ENCODE measurements at regions of chr14 and their contacts with region 1.

Region 1: DNA sequence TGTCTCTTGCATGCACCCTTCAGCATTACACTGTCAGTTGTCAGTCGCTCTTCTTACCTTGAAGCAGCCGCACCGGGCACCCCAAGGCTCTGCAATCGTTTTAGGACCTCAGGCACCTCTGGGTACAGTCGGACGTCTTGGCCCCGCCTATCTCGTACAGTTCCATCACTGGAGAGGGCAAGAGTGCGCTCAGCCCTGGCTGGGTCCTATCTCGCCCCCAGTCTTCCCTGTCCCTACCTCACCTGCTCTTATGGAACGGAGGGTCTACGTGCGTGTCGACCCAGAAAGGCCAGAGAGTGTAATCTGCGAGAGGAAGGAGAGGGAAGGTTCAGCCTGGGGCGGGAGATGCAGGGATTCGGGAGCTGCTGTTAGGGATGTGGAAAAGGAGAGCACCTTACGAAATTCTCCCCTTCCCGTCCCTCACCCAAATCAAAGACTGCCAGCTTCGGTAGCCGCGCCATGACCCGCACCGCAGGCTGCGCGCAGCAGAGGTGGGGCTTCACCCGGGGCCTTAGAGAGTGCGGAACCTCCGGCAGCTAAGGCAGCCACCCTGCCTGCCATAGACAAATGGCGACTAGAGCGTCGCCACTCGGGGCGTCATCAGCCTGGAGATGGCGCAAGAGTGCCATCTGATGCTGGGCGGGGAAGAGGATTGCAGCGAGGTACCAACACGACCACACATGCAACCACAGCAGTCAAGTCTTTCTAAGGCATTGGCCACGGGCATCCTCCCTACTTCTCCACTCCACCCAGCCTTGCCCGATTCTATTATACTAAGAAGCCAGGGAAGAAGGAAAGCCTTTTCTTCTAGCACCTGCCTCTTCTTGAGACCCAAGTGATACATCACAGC is at the start of gene MDP1:
- DNase-seq: peak; percentile 76 to 96 (median 88)

Region 2: GRCh38 chr14:24232121-24232644 is 16.5 kb after region 1 on chr14 and contains the start of gene NEDD8:
- intact Hi-C with region 1: loop called (anchors 2 kb)
- DNase-seq: peak; percentile 87 to 98 (median 95)